Colonic mucosa (tissue), 4 donors: ENCODE measurements at regions of chr4 and their contacts with region 1.

Region 1: GRCh38 chr4:75940692-75941253 is at the start of gene NAAA:
- DNase-seq: peak; percentile 88
- H3K4me3 ChIP-seq: peak within 1 kb of the TSS; percentile 75
- H3K27ac ChIP-seq: peak within 1 kb of the TSS; percentile 84
- H3K4me1 ChIP-seq: peaks cover 4% of the 10 kb centered on the region
- H3K27me3 ChIP-seq: no peaks in the 10 kb centered on the region
- CTCF ChIP-seq: peak; percentile 58
- total RNA-seq, gene NAAA: 79.3 to 141 TPM

Region 2: GRCh38 chr4:75895744-75896314 is 44.9 kb before region 1 on chr4:
- intact Hi-C with region 1: loop called (anchors 5 kb)
- DNase-seq: peak; percentile 27
- H3K4me3 ChIP-seq: no peak overlapping the region
- H3K27ac ChIP-seq: no peak overlapping the region
- H3K4me1 ChIP-seq: no peaks in the 10 kb centered on the region
- H3K27me3 ChIP-seq: no peaks in the 10 kb centered on the region
- CTCF ChIP-seq: peak; percentile 65

Region 3: DNA sequence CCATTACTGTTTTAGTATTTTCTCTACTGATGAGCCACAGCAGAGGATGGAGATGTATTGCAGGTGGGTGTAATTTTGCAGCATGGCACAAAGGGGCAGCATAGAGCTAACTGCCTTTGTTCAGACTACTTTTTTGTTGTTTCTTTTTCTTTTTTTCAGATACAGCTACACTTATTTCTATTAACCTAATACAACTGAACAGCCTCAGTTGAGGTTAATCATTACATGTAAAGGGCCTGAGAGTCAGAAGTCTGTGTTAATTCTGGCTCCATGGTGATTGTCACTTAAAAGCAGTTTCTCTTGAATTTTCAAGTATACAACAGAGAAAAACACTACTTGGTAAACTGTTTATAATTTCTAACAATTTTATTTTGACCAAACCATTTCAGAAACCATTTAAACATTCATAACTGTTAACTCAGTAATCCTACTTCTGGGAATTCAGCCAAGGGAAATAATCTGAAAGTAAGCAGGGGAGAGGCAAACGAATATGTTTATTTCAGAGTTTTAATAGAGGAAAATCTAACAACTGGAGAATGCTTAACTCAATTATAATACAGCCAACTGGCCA is 24.6 kb before region 1 on chr4:
- intact Hi-C with region 1: loop called (anchors 2 kb)
- DNase-seq: peak; percentile 30
- H3K4me3 ChIP-seq: no peak overlapping the region
- H3K27ac ChIP-seq: peak overlapping the region; percentile 1
- H3K4me1 ChIP-seq: peaks cover 20% of the 10 kb centered on the region
- H3K27me3 ChIP-seq: no peaks in the 10 kb centered on the region
- CTCF ChIP-seq: peak; percentile 75